Ovary (tissue), 10 donors: ENCODE measurements at regions of chr16 and their contacts with region 1.

Region 1: DNA sequence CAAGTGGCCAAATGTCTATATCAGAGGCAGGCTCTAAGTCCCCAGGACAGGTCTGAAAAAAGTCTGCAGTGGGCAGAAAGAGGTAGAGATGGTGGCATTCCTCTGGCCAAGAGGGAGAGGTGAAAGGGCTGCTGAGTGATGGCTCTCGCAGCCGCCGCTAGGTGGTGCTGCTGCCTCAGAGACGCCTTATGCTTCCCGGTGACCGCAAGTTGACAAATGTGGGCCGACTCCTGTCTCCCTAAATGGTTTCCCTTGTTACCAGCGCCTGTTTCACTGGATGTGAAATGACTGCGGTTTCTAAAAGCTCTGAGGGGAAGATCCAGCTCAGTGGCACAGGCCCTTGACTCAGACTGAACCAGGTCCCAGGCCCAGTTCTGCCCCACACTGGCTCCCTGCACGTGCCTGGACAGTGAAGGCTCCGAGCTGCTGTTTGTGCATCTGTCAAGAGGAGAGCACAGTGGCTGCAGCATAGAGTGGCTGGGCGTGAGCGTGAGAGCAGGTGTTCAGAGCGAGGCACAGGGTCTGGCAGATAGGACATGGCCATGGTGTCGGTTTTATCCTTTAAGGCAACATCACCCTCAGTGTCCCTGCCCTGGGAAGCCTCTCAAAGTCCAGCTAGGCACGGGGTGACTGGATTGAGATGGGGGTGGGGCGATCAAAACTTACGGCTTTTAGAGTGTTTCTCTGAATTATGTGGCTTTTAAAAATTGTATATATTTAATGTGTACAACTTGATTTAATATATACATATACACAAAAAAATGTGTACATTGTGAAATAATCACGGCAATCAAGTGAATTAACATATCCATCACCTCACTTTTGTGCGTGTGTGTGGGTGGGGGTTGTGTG is 19.9 kb downstream of the CLEC16A start:
- DNase-seq: peak; percentile 75 to 89 (median 85)
- H3K4me3 ChIP-seq: no peak overlapping the region
- H3K27ac ChIP-seq: no peak overlapping the region
- H3K4me1 ChIP-seq: no peaks in the 10 kb centered on the region
- H3K27me3 ChIP-seq: no peaks in the 10 kb centered on the region
- CTCF ChIP-seq: peak; percentile 81 to 93 (median 85)
- EP300 ChIP-seq: no peak
- POLR2A ChIP-seq: no peak

Region 2: GRCh38 chr16:10269632-10270031 is 694.6 kb before region 1 on chr16:
- intact Hi-C with region 1: no loop called
- DNase-seq: no peak
- H3K4me3 ChIP-seq: no peak overlapping the region
- H3K27ac ChIP-seq: no peak overlapping the region
- H3K4me1 ChIP-seq: no peaks in the 10 kb centered on the region
- H3K27me3 ChIP-seq: no peaks in the 10 kb centered on the region
- CTCF ChIP-seq: no peak
- EP300 ChIP-seq: no peak
- POLR2A ChIP-seq: no peak

Region 3: GRCh38 chr16:10529895-10530669 is 434.2 kb before region 1 on chr16:
- intact Hi-C with region 1: no loop called
- DNase-seq: no peak
- H3K4me3 ChIP-seq: no peak overlapping the region
- H3K27ac ChIP-seq: no peak overlapping the region
- H3K4me1 ChIP-seq: no peaks in the 10 kb centered on the region
- H3K27me3 ChIP-seq: no peaks in the 10 kb centered on the region
- CTCF ChIP-seq: no peak
- EP300 ChIP-seq: no peak
- POLR2A ChIP-seq: no peak

Region 4: GRCh38 chr16:10859758-10860057 is 104.6 kb before region 1 on chr16:
- intact Hi-C with region 1: no loop called
- DNase-seq: no peak
- H3K4me3 ChIP-seq: no peak overlapping the region
- H3K27ac ChIP-seq: no peak overlapping the region
- H3K4me1 ChIP-seq: no peaks in the 10 kb centered on the region
- H3K27me3 ChIP-seq: no peaks in the 10 kb centered on the region
- CTCF ChIP-seq: no peak
- EP300 ChIP-seq: no peak
- POLR2A ChIP-seq: no peak

Region 5: DNA sequence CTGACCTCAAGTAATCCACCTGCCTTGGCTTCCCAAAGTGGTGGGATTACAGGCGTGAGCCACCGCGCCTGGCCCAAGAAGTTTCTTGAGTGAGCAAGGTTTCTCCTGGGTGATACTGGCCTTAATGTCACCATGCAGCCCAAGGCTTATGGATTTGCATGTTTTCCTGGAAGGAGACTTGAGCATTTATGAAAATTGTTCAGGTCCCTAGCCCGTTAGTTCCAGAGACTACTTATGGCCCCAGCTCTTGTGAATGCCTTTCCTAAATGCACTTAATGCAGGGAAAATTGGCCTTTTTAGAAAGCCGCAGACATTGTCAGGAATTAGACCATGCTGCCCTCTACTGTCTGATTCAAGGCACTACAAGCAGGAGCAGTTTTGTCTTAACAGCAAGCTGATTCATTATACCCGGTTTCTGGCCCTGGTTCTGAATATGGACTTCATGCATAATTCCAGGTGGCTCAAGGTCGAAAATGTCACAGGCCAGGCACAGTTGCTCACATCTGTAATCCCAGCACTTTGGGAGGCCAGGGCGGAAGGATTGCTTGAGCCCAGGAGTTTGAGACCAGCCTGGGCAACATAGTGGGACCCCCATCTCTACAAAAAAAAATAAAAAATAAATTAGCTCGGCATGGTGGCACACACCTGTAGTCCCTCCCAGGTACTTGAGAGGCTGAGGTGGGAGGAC is 1103.6 kb after region 1 on chr16:
- intact Hi-C with region 1: loop called in 1 of 4 experiments (anchors 10 kb)
- DNase-seq: peak; percentile 29 to 76 (median 42)
- H3K4me3 ChIP-seq: no peak overlapping the region
- H3K27ac ChIP-seq: no peak overlapping the region
- H3K4me1 ChIP-seq: peaks cover 9% of the 10 kb centered on the region
- H3K27me3 ChIP-seq: no peaks in the 10 kb centered on the region
- CTCF ChIP-seq: peak; percentile 78 to 86 (median 81)
- EP300 ChIP-seq: no peak
- POLR2A ChIP-seq: no peak